ENCODE measurements at regions of chr5 and their contacts with region 1.

Region 1: DNA sequence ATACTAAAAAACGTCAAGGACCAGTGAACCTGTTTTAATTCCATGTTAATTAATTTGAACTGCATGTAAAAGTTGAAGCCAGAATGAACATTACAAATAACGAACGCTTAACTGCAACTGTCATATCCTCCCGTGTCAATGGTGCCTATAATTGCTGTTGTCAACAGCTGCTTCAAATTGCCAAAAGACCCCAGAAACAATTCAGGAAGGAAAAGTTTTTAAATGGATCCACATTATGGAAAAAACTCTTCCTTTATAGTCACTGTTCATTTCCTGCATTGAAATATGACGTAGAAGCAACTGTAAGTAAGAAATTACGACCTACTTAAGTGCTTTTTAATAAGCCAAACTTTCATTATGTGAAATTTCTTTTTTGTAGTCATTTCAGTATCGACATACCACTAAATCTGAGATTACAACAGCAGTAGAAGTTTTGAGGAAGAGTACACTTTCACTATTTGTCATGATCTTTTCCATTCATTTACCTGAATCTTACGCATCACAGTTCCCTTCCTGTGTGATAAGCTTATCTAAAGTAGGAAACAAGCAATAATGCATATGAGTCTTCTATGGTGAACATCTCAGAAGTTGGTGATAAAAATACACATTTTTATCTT is 37.8 kb downstream of the MEF2C start:
- DNase-seq: no peak
- H3K4me3 Mint-ChIP-seq: no peak overlapping the region
- H3K27ac Mint-ChIP-seq: no peak overlapping the region
- H3K4me1 Mint-ChIP-seq: peaks cover 6% of the 10 kb centered on the region
- H3K27me3 Mint-ChIP-seq: peaks cover 10% of the 10 kb centered on the region

Region 2: GRCh38 chr5:88827997-88828396 is 17.2 kb before region 1 on chr5:
- CTCF ChIA-PET with region 1: no interaction called
- POLR2A ChIA-PET with region 1: no interaction called
- intact Hi-C with region 1: loop called (anchors 1 kb)
- DNase-seq: no peak
- H3K4me3 Mint-ChIP-seq: no peak overlapping the region
- H3K27ac Mint-ChIP-seq: no peak overlapping the region
- H3K4me1 Mint-ChIP-seq: peaks cover 32% of the 10 kb centered on the region
- H3K27me3 Mint-ChIP-seq: peaks cover 10% of the 10 kb centered on the region

Region 3: GRCh38 chr5:88833371-88834130 is 11.6 kb before region 1 on chr5:
- CTCF ChIA-PET with region 1: no interaction called
- POLR2A ChIA-PET with region 1: interaction called, 5 read pairs
- intact Hi-C with region 1: loop called (anchors 1 kb)
- DNase-seq: peak; percentile 74
- H3K4me3 Mint-ChIP-seq: no peak overlapping the region
- H3K27ac Mint-ChIP-seq: no peak overlapping the region
- H3K4me1 Mint-ChIP-seq: peaks cover 15% of the 10 kb centered on the region
- H3K27me3 Mint-ChIP-seq: peaks cover 9% of the 10 kb centered on the region

Region 4: GRCh38 chr5:88870285-88870684 is 25.1 kb after region 1 on chr5:
- CTCF ChIA-PET with region 1: no interaction called
- POLR2A ChIA-PET with region 1: no interaction called
- intact Hi-C with region 1: no loop called
- DNase-seq: no peak
- H3K4me3 Mint-ChIP-seq: no peak overlapping the region
- H3K27ac Mint-ChIP-seq: no peak overlapping the region
- H3K4me1 Mint-ChIP-seq: no peaks in the 10 kb centered on the region
- H3K27me3 Mint-ChIP-seq: peaks cover 7% of the 10 kb centered on the region